ENCODE measurements at regions of chr12 and their contacts with region 1.

Region 1: DNA sequence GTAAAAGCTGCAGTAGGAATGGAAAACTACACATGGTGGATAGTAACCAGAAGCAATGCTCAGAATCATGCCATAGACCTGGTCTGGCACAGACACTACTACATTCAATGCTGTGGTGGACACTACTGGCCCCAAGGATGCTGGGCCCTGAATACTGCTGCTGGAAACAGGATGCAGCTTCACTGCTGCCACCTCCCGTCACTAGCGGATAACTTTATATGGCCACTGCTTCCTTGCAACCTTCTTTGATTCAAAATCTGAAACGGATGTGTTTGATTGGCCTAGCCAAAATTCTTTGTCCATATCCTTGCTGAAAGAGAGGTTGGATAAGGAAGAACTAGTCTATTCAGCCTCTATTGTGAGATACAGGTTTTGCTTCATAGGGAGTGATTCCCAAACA is 30.7 kb downstream of the ADCY6 start:
- DNase-seq: no peak
- ATAC-seq: no peak
- H3K4me3 Mint-ChIP-seq: no peak overlapping the region
- H3K27ac Mint-ChIP-seq: no peak overlapping the region
- H3K4me1 Mint-ChIP-seq: peaks cover 2% of the 10 kb centered on the region
- H3K27me3 Mint-ChIP-seq: peaks cover 2% of the 10 kb centered on the region

Region 2: DNA sequence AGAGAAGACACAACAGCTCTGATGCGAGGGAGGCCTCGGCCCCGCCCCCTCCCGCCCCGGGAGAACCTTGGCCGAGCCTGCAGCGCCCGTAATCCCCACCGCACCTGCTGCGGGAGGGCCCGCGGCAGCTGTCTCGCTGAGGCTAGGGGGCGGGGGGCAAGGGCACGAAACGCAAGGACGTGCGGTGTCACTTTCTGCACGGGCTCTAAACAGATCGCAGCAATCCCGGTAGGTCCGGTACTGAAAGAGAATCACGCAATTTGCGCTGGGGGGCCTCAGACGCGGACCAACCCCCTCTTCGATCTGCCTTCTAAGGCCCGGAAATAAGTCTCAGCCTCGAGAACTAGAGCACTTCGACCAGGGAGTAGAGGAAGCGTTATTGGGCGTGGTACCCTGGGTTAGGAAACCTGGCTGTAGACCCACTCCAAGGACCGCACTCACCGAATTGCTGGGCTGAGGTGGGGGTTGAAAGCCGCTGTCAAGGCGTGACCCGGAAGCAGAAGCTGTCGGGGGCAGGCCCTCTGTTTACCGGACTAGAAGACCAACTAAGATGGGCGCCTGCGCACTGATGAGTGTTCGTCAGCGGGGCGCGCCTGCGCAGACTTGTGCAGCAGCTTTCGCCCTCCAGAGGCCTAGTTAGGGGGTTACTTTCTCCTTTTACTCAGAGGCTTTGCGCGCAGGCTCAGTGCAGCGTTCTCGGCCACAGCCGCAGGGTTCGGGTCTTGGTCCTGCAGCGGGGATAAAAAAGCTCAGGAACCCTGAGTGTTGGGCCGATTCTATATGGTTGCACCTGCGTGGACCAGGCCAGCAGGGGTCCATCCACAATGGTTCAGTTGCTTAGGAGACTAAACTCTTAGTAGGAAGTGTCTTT is 601.0 kb before region 1 on chr12 and contains the start of gene ASB8:
- CTCF ChIA-PET with region 1: no interaction called
- POLR2A ChIA-PET with region 1: no interaction called
- intact Hi-C with region 1: no loop called
- DNase-seq: peak; percentile 100
- ATAC-seq: peak; percentile 96
- H3K4me3 Mint-ChIP-seq: peak within 1 kb of the TSS; percentile 88
- H3K27ac Mint-ChIP-seq: peak within 1 kb of the TSS; percentile 94
- H3K4me1 Mint-ChIP-seq: peaks cover 40% of the 10 kb centered on the region
- H3K27me3 Mint-ChIP-seq: no peaks in the 10 kb centered on the region
- total RNA-seq, gene ASB8: 28.8 to 33.0 TPM

Region 3: GRCh38 chr12:48512855-48513254 is 245.4 kb before region 1 on chr12:
- CTCF ChIA-PET with region 1: no interaction called
- POLR2A ChIA-PET with region 1: no interaction called
- intact Hi-C with region 1: loop called in 1 of 2 experiments (anchors 2 kb)
- DNase-seq: peak; percentile 29
- ATAC-seq: peak; percentile 98
- H3K4me3 Mint-ChIP-seq: no peak overlapping the region
- H3K27ac Mint-ChIP-seq: peak overlapping the region; percentile 73
- H3K4me1 Mint-ChIP-seq: peaks cover 13% of the 10 kb centered on the region
- H3K27me3 Mint-ChIP-seq: peaks cover 7% of the 10 kb centered on the region

Region 4: GRCh38 chr12:48736456-48736855 is 21.8 kb before region 1 on chr12:
- CTCF ChIA-PET with region 1: interaction called, 12 read pairs
- POLR2A ChIA-PET with region 1: interaction called, 4 read pairs
- intact Hi-C with region 1: no loop called
- DNase-seq: no peak
- ATAC-seq: no peak
- H3K4me3 Mint-ChIP-seq: no peak overlapping the region
- H3K27ac Mint-ChIP-seq: no peak overlapping the region
- H3K4me1 Mint-ChIP-seq: no peaks in the 10 kb centered on the region
- H3K27me3 Mint-ChIP-seq: peaks cover 13% of the 10 kb centered on the region

Region 5: GRCh38 chr12:48788854-48789796 is 30.9 kb after region 1 on chr12 and contains the start of gene ADCY6:
- CTCF ChIA-PET with region 1: interaction called, 116 read pairs
- POLR2A ChIA-PET with region 1: no interaction called
- intact Hi-C with region 1: no loop called
- DNase-seq: peak; percentile 33
- ATAC-seq: no peak
- H3K4me3 Mint-ChIP-seq: peak within 1 kb of the TSS; percentile 46
- H3K27ac Mint-ChIP-seq: no peak within 1 kb of the TSS
- H3K4me1 Mint-ChIP-seq: no peaks in the 10 kb centered on the region
- H3K27me3 Mint-ChIP-seq: peaks cover 30% of the 10 kb centered on the region
- total RNA-seq, gene ADCY6: 0.05 to 0.09 TPM

Region 6: GRCh38 chr12:48828293-48828692 is 70.1 kb after region 1 on chr12:
- CTCF ChIA-PET with region 1: no interaction called
- POLR2A ChIA-PET with region 1: no interaction called
- intact Hi-C with region 1: no loop called
- DNase-seq: no peak
- ATAC-seq: no peak
- H3K4me3 Mint-ChIP-seq: no peak overlapping the region
- H3K27ac Mint-ChIP-seq: no peak overlapping the region
- H3K4me1 Mint-ChIP-seq: no peaks in the 10 kb centered on the region
- H3K27me3 Mint-ChIP-seq: no peaks in the 10 kb centered on the region

Measured in activated CD4-positive, alpha-beta T cell treated with anti-CD3 and anti-CD28 coated beads for 36 hours (primary cell).